Ascending aorta (tissue), 2 donors: ENCODE measurements at regions of chr4 and their contacts with region 1.

Region 1: DNA sequence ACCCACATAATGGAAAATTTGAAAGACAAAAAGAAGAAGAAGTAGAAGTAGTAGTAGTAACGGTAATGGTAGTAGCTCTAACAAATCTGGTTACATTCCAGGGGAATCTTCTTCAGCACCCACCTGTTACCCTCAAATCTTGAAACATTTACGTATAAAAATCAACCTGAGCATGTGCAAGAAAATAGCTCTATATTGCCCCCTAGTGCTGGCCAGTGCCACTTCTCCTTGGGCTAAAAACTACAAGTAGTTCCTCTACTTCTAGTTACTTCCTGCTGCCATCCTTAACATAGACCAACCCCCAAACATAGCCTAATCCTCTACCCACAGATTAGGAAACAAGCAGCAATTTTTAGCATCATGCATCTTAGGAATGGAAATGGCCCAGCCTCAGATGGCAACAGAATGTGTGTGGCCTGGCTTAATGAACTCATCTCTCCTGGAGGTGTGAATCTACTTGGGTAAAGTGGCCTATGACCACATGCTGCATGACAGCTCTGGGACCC is 3.1 kb downstream of the PDGFC start:
- DNase-seq: peak; percentile 15 to 85
- H3K4me3 ChIP-seq: peak overlapping the region; percentile 88 to 93
- H3K27ac ChIP-seq: peak overlapping the region; percentile 98 to 99
- H3K4me1 ChIP-seq: peaks cover 0 to 7% of the 10 kb centered on the region in 2 donors
- H3K27me3 ChIP-seq: no peaks in the 10 kb centered on the region
- CTCF ChIP-seq: peak; percentile 74 to 86 (median 83)

Region 2: DNA sequence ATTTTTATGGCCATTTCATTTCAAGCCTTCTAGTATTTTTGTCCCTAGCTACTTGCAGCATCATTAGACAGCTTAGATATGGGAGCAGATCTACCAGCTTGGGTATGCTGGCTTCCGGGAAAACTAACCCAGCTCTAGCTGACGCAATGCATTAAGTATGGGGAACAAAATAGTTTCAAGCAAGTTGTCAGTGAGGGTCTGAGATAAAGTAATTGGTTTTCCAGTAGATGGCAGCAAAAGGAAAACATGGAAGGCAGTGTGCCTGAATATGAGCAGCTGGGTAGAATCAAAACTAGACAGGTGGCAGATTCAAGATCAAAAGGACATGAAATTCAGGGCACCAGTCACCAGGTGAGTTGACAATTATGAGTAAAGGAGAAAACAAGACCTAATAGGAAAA is 674.0 kb before region 1 on chr4:
- intact Hi-C with region 1: loop called (anchors 10 kb)
- DNase-seq: no peak
- H3K4me3 ChIP-seq: no peak overlapping the region
- H3K27ac ChIP-seq: no peak overlapping the region
- H3K4me1 ChIP-seq: no peaks in the 10 kb centered on the region
- H3K27me3 ChIP-seq: no peaks in the 10 kb centered on the region
- CTCF ChIP-seq: peak in 1 of 3 experiments; percentile 30

Region 3: GRCh38 chr4:156575430-156576073 is 393.0 kb before region 1 on chr4:
- intact Hi-C with region 1: loop called (anchors 5 kb)
- DNase-seq: no peak
- H3K4me3 ChIP-seq: no peak overlapping the region
- H3K27ac ChIP-seq: peak overlapping the region in 1 of 2 donors; percentile 31
- H3K4me1 ChIP-seq: no peaks in the 10 kb centered on the region
- H3K27me3 ChIP-seq: no peaks in the 10 kb centered on the region
- CTCF ChIP-seq: no peak

Region 4: DNA sequence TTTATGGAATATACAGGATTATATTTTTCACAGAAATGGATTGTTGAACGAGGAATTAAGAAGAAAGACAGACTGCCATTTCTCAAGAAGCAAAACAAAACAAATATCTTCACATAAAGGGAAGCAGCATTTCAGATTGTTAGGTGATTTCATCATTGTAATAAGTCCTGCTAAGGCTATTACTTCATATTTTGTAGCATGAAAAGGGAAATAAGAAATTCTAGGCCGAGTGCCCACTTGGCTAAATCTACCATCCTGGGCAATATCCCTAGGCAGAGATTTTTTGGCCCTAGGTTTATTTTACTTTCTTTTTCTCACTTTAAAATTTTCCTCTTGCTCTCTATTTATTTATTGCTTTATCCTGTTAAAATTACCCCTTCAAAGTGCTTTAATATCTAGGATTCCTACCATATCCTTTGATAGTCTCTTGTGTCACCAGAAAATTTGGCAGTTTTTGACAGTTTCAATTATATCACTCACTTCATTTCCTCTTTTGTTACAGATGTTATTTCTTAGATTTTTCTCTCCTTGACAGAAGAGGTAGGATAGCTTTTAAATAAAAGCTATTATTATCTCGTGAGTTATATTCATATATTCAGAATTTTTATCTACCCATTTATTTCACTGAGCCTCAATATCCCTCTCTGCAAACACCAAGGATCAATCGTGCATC is 139.2 kb before region 1 on chr4:
- intact Hi-C with region 1: loop called (anchors 5 kb)
- DNase-seq: peak in 1 of 2 donors; percentile 72
- H3K4me3 ChIP-seq: peak overlapping the region; percentile 41 to 43
- H3K27ac ChIP-seq: peak overlapping the region; percentile 65 to 73
- H3K4me1 ChIP-seq: peaks cover 0 to 13% of the 10 kb centered on the region in 2 donors
- H3K27me3 ChIP-seq: no peaks in the 10 kb centered on the region
- CTCF ChIP-seq: no peak

Region 5: DNA sequence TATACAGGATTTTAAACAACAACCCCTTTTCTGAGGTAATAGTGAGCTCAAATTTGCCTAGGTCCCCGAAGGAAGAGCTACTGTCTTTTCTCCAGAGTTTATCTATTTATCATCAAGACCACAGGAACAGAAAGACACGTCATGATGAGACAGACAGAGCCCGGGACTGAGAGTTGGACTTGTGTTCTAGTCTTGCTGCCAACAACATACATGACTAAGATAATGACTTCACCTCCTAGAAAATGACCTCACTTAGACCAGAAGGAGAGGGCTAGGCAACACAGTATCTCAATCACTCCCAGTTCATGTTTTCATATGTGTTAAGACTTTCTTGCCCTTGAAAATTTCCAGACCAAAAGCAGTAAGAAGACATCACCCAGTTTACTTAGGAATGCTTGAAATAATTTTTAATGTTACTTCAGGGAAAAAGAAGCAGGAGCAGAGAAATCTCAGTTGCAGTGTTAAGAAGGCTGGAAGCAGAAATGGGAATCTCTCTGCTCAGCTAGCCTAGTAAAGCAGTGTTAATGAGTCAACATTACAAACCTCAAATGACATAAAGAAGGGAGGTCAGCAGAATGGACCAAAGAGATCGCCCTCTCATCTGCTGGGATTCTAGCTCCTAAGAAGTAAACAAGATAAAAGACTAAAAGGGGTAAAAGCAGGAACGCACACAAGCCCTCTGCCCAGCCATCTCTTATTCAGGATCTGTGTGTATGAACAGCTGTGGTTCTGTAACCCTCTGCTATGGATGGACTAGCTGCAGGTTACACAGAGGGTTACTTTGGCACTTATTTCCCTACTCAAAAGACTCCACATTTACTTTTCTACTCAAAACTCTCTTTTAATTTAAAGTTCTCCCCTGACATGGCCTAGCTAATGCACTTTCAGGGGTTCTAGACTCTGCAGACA is 21.8 kb before region 1 on chr4:
- intact Hi-C with region 1: loop called (anchors 2 kb)
- DNase-seq: peak in 1 of 2 donors; percentile 85
- H3K4me3 ChIP-seq: peak overlapping the region in 1 of 2 donors; percentile 3
- H3K27ac ChIP-seq: peak overlapping the region; percentile 83 to 87
- H3K4me1 ChIP-seq: peaks cover 4 to 44% of the 10 kb centered on the region in 2 donors
- H3K27me3 ChIP-seq: no peaks in the 10 kb centered on the region
- CTCF ChIP-seq: no peak

Region 6: DNA sequence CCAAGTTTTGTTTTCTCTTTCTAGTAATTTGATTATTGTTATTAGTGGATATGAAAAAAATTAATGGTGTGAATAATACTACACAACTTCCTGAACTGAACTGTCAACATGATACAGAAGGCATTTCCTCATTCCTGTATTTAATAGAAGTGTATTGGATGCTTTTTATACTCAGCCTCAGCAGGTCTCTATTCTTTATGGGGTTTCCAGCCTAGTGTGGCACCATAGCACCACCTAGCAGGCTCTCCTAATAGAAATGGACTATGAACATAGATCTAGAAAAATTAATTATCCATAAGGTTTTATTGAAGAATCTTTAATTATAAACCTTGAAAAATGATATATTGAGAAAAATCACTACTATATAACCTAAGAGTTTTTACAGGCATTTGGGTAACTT is 159.9 kb after region 1 on chr4:
- intact Hi-C with region 1: loop called (anchors 5 kb)
- DNase-seq: no peak
- H3K4me3 ChIP-seq: no peak overlapping the region
- H3K27ac ChIP-seq: no peak overlapping the region
- H3K4me1 ChIP-seq: no peaks in the 10 kb centered on the region
- H3K27me3 ChIP-seq: no peaks in the 10 kb centered on the region
- CTCF ChIP-seq: peak in 1 of 3 experiments; percentile 61